Activated CD4-positive, alpha-beta memory T cell treated with anti-CD3 and anti-CD28 coated beads, Interleukin-2, amount 10 ng/mL, durations not matched to agents 7 days and 5 days (primary cell): ENCODE measurements at regions of chr9 and their contacts with region 1.

Region 1: DNA sequence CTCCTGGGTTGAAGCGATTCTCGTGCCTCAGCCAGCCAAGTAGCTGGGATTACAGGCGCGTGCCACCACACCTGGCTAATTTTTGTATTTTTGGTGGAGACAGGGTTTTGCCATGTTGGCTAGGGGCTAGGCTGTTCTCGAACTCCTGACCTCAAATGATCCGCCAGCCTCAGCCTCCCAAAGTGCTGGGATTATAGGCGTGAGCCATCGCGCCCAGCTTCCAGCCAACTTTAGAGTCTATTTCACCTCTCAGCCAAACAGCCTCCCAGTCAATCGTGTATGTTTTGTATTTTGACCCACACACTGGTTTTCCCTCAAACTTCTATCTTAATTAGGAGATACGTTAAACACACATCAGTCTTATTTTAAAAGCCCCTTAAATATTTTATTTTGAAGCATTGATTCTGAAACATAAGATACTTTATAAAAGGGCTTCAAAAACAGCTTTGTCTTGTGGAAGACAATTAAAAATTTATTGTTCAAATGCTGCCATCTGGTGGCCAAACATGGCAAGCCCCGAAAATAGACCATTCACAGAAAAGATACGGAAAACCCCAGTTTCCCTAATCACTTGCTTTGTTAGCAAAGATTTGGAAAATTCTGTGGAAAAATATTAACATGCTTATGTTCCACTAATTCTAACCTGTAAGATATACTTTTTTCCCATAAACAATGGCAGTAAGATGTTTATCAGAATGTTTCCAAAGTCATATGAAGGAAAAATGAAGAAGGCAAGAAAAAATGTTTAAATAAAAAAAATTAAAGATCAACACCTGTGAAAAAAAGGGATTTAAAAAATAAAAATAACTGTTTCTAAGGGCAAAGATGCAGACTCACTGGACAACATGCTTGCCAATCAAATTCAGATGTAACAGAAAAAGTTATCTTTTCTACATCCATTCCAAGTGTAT is 33.1 kb downstream of the APTX start:
- DNase-seq: peak; percentile 61
- H3K4me3 Mint-ChIP-seq: no peak overlapping the region
- H3K27ac Mint-ChIP-seq: no peak overlapping the region
- H3K4me1 Mint-ChIP-seq: peaks cover 2% of the 10 kb centered on the region
- H3K27me3 Mint-ChIP-seq: no peaks in the 10 kb centered on the region

Region 2: GRCh38 chr9:32589083-32589723 is 379.2 kb before region 1 on chr9:
- CTCF ChIA-PET with region 1: interaction called, 35 read pairs
- POLR2A ChIA-PET with region 1: no interaction called
- DNase-seq: no peak
- H3K4me3 Mint-ChIP-seq: no peak overlapping the region
- H3K27ac Mint-ChIP-seq: no peak overlapping the region
- H3K4me1 Mint-ChIP-seq: no peaks in the 10 kb centered on the region
- H3K27me3 Mint-ChIP-seq: peaks cover 28% of the 10 kb centered on the region